Activated CD4-positive, alpha-beta memory T cell treated with anti-CD3 and anti-CD28 coated beads, Interleukin-2, amount 10 ng/mL, durations not matched to agents 7 days and 5 days (primary cell): ENCODE measurements at regions of chr22 and their contacts with region 1.

Region 1: DNA sequence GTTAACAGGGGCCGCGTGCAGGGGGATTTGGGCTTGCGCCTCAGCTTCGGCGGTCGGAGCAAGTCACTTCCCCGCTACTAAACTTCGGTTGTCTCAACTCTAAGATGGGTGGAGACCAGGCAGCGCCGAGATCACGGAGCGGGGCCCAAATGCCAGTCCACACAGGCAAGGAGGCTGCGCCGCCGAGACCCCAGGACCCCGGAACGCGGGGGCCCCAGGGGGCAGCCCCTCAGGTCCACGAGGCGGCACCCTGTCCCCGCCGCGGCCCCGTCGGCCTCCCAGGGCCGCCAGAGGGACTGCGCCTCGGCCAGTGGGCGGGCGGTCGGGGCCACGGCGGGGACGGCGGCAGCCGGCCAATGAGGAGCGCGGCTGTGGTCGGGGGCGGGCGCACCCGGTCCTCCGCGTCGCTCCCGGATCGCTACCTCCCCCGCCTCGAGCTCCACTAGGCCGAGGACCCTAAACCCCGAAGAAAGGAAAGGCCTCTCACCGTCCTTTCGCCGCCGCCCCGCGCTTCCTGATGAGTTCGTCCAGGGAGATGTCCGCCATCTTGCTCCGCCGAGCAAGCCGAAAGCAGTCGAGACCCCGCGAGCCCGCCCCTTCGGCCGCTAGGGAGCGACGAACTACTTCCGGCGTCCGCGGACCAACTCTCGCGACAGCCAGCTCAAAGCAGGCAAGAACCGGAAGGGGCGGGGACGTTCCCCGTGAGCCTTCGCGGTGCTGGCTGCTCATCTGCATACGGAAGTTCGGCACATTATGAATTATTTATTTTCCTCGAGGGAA is at the start of gene POLDIP3:
- DNase-seq: peak; percentile 99
- H3K4me3 Mint-ChIP-seq: peak within 1 kb of the TSS; percentile 92
- H3K27ac Mint-ChIP-seq: peak within 1 kb of the TSS; percentile 98
- H3K4me1 Mint-ChIP-seq: peaks cover 56% of the 10 kb centered on the region
- H3K27me3 Mint-ChIP-seq: no peaks in the 10 kb centered on the region
- total RNA-seq, gene POLDIP3: 71.4 to 74.7 TPM

Region 2: DNA sequence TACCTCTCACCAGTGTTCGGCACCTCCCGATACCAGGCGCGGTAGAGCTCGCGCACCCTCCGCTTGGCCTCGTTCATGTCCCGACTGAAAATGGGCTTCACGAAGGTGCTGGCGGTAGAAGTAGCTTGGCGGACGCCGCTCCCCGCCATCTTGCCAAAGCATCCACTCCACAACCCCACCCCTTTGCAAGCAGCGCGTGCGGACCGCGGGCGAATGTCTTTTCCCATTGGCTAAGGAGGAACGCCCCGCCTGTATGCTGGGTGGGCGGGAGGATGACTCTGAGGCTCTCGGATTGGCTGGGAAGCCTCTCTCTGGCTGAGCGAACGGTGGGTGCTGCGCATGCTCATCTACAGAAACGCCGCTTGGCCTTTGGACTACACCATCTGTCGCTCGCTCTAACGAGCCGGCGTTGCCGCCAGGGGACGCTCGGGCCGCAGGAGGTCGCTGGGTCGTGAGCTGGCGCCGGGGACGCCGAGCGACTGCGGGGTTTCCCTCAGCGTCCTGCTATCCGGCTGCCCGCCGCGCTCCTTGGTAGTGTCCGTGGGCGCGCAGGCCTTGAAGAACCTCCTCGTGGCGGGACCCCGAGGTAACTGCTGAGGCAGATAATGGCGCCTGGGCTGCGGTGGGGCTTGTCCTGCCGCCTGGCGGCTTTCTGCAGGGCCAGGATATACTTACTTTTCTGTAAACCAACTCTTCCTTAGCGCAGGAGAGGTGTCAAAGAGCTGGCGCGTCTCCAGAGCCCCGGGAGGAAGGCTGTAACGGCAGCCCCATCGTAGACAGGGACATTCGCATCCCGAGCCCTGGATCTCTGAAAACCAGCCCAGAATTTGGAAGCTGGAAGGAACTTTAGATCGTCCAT is 523.7 kb before region 1 on chr22 and contains the start of gene NDUFA6:
- CTCF ChIA-PET with region 1: no interaction called
- POLR2A ChIA-PET with region 1: interaction called, 16 read pairs
- DNase-seq: peak; percentile 99
- H3K4me3 Mint-ChIP-seq: peak within 1 kb of the TSS; percentile 99
- H3K27ac Mint-ChIP-seq: peak within 1 kb of the TSS; percentile 99
- H3K4me1 Mint-ChIP-seq: peaks cover 31% of the 10 kb centered on the region
- H3K27me3 Mint-ChIP-seq: no peaks in the 10 kb centered on the region
- total RNA-seq, gene NDUFA6: 94.8 to 97.1 TPM

Region 3: GRCh38 chr22:42151924-42152635 is 462.4 kb before region 1 on chr22:
- CTCF ChIA-PET with region 1: no interaction called
- POLR2A ChIA-PET with region 1: no interaction called
- DNase-seq: no peak
- H3K4me3 Mint-ChIP-seq: no peak overlapping the region
- H3K27ac Mint-ChIP-seq: no peak overlapping the region
- H3K4me1 Mint-ChIP-seq: no peaks in the 10 kb centered on the region
- H3K27me3 Mint-ChIP-seq: no peaks in the 10 kb centered on the region

Region 4: DNA sequence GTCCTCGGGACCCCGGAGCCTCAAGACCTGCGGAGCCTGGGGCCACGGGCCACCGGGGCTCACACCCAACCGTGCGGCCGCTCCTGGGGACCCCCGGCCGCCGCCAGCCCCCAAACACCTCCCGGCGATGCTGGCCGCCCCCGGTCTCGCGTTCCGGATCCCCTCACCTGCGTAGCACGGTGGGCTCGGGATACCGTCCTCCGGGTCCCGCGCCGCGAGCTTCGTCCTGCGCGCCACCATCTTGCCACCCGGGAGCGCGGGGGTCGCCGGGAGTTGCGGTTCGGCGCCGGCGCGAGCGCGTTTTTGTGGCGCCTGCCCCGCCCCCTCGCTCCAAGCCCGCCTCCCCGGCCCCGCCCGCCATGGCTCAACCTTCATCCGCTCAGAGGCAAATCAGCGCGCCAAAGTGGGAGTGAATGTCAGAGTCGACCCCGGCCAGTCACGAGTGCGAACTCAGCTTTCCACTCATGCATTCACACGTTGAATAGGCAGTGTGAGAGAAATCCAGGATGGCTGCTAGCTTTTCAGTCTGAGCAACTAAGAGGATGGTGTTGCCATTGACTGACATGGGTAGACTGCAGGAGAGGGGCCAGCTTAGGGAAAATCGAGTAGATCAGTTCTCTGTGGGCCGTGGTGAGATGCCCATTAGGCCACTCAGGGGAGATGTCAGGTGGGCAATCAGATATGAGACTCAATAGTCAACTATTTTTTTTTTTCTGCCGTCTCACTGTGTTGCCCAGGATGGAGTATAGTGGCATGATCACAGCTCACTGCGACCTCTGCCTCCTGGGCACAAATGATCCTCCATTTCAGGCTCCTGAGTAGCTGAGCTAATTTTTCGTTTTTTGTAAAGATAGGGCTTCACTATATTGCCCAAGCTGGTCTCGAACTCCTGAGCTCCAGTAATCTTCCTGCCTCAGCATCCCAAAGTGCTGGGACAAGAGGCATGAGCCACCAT is 32.5 kb before region 1 on chr22:
- CTCF ChIA-PET with region 1: interaction called, 4 read pairs
- POLR2A ChIA-PET with region 1: interaction called, 47 read pairs
- DNase-seq: peak; percentile 88
- H3K4me3 Mint-ChIP-seq: peak overlapping the region; percentile 96
- H3K27ac Mint-ChIP-seq: peak overlapping the region; percentile 69
- H3K4me1 Mint-ChIP-seq: peaks cover 14% of the 10 kb centered on the region
- H3K27me3 Mint-ChIP-seq: no peaks in the 10 kb centered on the region

Region 5: DNA sequence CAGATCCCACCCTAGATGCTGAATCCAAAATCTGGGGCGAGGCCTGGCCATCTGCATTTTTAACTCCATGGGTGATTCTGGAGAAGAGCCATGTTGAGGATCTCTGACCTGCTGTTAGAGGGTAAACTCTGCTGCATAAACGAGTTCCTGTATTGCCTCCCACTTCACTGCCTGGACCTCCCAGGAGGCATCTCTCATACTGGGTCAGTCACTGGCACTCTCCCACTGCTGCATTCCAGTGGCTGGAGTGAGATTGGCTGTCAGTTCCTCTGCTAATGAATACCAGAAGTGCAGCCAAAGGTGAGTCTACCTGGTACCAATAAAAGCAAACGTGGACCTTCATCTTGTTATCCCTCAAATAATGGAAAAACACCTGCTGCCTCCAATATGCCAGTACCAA is 10.1 kb before region 1 on chr22:
- CTCF ChIA-PET with region 1: no interaction called
- POLR2A ChIA-PET with region 1: interaction called, 22 read pairs
- DNase-seq: no peak
- H3K4me3 Mint-ChIP-seq: no peak overlapping the region
- H3K27ac Mint-ChIP-seq: no peak overlapping the region
- H3K4me1 Mint-ChIP-seq: peaks cover 12% of the 10 kb centered on the region
- H3K27me3 Mint-ChIP-seq: no peaks in the 10 kb centered on the region

Region 6: GRCh38 chr22:42639541-42640241 is 25.2 kb after region 1 on chr22:
- CTCF ChIA-PET with region 1: no interaction called
- POLR2A ChIA-PET with region 1: interaction called, 29 read pairs
- DNase-seq: no peak
- H3K4me3 Mint-ChIP-seq: no peak overlapping the region
- H3K27ac Mint-ChIP-seq: peak overlapping the region; percentile 6
- H3K4me1 Mint-ChIP-seq: no peaks in the 10 kb centered on the region
- H3K27me3 Mint-ChIP-seq: no peaks in the 10 kb centered on the region

Region 7: GRCh38 chr22:42856865-42857704 is 242.6 kb after region 1 on chr22 and contains the start of gene ARFGAP3:
- CTCF ChIA-PET with region 1: no interaction called
- POLR2A ChIA-PET with region 1: interaction called, 29 read pairs
- DNase-seq: peak; percentile 95
- H3K4me3 Mint-ChIP-seq: peak within 1 kb of the TSS; percentile 81
- H3K27ac Mint-ChIP-seq: peak within 1 kb of the TSS; percentile 86
- H3K4me1 Mint-ChIP-seq: peaks cover 8% of the 10 kb centered on the region
- H3K27me3 Mint-ChIP-seq: no peaks in the 10 kb centered on the region
- total RNA-seq, gene ARFGAP3: 41.1 to 42.1 TPM

Region 8: GRCh38 chr22:43187171-43188099 is 572.9 kb after region 1 on chr22:
- CTCF ChIA-PET with region 1: no interaction called
- POLR2A ChIA-PET with region 1: interaction called, 10 read pairs
- DNase-seq: peak; percentile 97
- H3K4me3 Mint-ChIP-seq: peak overlapping the region; percentile 80
- H3K27ac Mint-ChIP-seq: peak overlapping the region; percentile 92
- H3K4me1 Mint-ChIP-seq: peaks cover 37% of the 10 kb centered on the region
- H3K27me3 Mint-ChIP-seq: peaks cover 3% of the 10 kb centered on the region